Ovary (tissue), 10 donors: ENCODE measurements at regions of chr9 and their contacts with region 1.

Region 1: GRCh38 chr9:125407974-125408900 is 146.6 kb downstream of the GAPVD1 start:
- DNase-seq: peak; percentile 82 to 93 (median 89)
- H3K4me3 ChIP-seq: peak overlapping the region; percentile 70
- H3K27ac ChIP-seq: peak overlapping the region; percentile 75 to 89
- H3K4me1 ChIP-seq: peaks cover 6% of the 10 kb centered on the region
- H3K27me3 ChIP-seq: no peaks in the 10 kb centered on the region
- CTCF ChIP-seq: peak; percentile 87 to 89 (median 89)
- EP300 ChIP-seq: no peak
- POLR2A ChIP-seq: peak; percentile 20

Region 2: GRCh38 chr9:124908570-124908969 is 499.7 kb before region 1 on chr9:
- intact Hi-C with region 1: no loop called
- DNase-seq: no peak
- H3K4me3 ChIP-seq: no peak overlapping the region
- H3K27ac ChIP-seq: no peak overlapping the region
- H3K4me1 ChIP-seq: no peaks in the 10 kb centered on the region
- H3K27me3 ChIP-seq: no peaks in the 10 kb centered on the region
- CTCF ChIP-seq: no peak
- EP300 ChIP-seq: no peak
- POLR2A ChIP-seq: no peak

Region 3: DNA sequence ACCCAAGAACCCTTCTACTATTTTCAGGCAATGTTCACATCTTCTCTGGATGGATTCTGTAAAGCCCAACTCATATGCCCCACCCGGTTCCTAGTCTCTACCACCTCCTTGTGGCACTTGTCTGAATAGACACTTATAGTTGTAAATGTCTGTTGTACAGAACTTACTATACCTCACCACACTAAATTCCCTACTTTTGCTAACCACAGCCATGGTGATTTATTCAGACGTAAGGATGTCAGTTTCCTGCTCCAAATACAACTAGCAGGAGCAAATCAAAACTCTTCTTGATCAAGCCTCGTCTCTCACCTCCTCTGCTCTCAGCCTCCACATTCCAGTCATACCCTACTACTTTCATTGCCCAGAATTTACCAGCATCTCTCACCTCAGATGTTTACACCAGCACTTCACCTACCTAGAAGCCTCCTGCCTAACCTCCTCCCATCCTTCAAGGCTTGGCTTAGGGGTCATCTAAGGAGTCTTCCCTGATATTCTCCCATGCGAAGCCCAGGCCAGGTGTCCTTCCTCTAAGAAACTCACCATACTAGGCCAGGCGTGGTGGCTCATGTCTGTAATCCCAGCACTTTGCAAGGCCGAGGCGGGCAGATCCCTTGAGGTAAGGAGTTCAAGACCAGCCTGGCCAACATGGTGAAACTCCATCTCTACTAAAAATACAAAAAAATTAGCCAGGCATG is 223.3 kb after region 1 on chr9:
- intact Hi-C with region 1: loop called (anchors 5 to 10 kb)
- DNase-seq: no peak
- H3K4me3 ChIP-seq: no peak overlapping the region
- H3K27ac ChIP-seq: no peak overlapping the region
- H3K4me1 ChIP-seq: peaks cover 3% of the 10 kb centered on the region
- H3K27me3 ChIP-seq: no peaks in the 10 kb centered on the region
- CTCF ChIP-seq: peak in 2 of 3 donors; percentile 47 to 51
- EP300 ChIP-seq: no peak
- POLR2A ChIP-seq: no peak

Region 4: DNA sequence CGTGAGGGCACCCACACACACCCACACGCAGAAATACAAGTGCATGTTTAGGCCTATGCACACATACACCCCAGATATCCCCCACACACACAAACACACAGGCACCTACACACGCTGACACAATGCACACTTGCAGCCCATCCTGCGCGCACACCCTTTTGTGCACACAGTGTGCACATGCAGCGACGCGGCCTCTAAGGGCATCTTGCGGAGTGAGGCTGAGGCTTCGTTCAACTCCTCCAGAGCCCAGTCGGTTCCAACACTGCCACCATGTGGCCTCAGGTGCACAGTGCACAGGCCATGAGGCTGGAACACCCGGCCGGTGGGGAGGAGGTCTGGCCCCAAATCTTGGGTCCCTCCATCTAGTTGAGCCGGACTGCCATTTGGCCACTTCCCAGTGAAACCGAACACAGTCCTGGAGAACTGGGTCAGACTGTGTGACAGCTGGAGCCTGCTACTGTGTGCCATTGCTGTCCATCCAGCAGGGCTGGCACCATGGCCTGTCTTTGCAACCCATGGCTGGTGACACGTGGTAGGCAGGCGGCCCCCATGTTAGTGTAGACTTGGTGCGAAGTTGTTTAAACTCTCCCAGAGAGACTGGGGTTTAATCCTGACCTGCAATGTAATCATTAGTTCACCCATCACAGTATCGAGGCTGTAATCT is 820.7 kb after region 1 on chr9:
- intact Hi-C with region 1: loop called (anchors 5 kb)
- DNase-seq: peak; percentile 66 to 85 (median 77)
- H3K4me3 ChIP-seq: no peak overlapping the region
- H3K27ac ChIP-seq: no peak overlapping the region
- H3K4me1 ChIP-seq: no peaks in the 10 kb centered on the region
- H3K27me3 ChIP-seq: no peaks in the 10 kb centered on the region
- CTCF ChIP-seq: peak; percentile 67 to 91 (median 82)
- EP300 ChIP-seq: no peak
- POLR2A ChIP-seq: no peak

Region 5: DNA sequence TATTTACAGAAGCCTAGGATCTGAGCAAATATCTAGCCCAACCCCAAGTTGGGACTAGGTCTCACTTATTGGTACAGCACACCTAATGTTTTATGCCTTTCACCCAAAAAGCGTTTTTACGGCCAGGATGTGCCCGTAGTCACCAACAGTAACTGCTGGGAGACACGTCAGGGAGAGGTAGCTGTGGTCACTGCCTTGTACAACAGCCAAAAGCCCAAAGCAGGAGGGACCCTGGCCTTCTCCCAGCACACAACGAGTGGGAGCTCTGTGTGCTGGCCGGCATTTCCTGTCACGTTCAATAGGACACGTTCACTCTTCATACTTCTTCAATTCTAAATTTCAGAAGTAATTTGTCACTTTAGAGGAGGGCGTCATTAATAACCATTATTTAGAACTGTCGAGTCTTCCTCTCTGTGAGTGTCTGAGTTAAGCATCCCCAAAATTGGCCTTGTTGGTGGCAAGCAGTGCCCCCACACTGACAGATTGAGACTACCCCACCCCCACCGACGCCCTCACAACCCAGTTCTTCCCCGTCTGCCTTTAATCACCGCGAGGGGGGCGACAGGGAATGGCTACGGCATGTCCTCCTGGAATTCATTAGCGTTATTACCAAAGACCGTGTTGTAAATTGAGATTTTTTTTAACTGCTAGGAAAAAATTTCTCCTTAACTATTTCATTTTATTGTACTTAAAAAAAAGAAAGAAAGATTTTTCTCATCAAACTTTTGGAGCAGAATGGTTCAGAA is 999.1 kb after region 1 on chr9:
- intact Hi-C with region 1: loop called in 1 of 4 experiments (anchors 10 kb)
- DNase-seq: no peak
- H3K4me3 ChIP-seq: no peak overlapping the region
- H3K27ac ChIP-seq: no peak overlapping the region
- H3K4me1 ChIP-seq: peaks cover 3% of the 10 kb centered on the region
- H3K27me3 ChIP-seq: no peaks in the 10 kb centered on the region
- CTCF ChIP-seq: no peak
- EP300 ChIP-seq: no peak
- POLR2A ChIP-seq: no peak